ENCODE measurements at regions of chr1 and their contacts with region 1.

Region 1: DNA sequence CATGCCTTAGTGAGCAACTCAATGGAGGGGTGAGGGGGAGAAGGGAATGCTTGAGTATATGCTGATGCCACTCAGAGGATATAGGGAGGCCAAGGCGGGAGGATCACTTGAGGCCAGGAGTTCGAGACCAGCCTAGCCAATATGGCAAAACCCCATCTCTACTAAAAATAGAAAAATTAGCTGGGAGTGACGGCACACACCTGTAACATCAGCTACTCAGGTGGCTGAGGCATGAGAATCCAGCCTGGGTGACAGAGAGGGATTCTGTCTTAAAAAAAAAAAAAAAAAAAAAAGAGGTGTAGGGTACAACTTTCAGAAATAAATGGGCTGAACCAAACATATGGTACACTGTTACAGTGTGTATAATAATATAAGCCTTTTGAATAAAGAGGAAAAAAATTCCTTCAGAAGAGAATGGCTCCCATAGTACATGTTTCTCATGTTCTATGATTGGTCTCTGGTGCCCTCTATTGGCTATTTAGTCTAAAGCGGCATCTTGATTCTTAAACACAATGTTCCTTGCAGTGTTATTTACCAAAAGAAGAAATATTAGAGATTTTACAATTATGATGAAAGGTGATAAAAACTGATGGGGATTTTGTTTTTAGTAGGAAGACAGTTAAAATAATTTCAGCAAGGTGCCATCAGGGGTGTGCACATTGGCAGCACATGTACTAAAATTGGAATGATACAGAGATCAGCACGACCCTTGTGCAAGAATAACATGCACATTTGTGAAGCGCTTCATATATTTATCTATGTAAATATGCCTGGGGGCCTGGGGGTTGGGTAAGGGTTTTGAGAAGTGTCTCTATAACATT is 109.8 kb downstream of the PATJ start:
- DNase-seq: peak; percentile 33
- H3K4me3 ChIP-seq: no peak overlapping the region
- H3K27ac ChIP-seq: no peak overlapping the region
- H3K4me1 ChIP-seq: no peaks in the 10 kb centered on the region
- H3K27me3 ChIP-seq: no peaks in the 10 kb centered on the region
- CTCF ChIP-seq: peak; percentile 25 to 77 (median 70)
- POLR2A ChIP-seq: no peak

Region 2: GRCh38 chr1:59971464-59971911 is 1880.6 kb before region 1 on chr1:
- intact Hi-C with region 1: loop called (anchors 10 kb)
- DNase-seq: peak; percentile 60
- H3K4me3 ChIP-seq: no peak overlapping the region
- H3K27ac ChIP-seq: no peak overlapping the region
- H3K4me1 ChIP-seq: peaks cover 11% of the 10 kb centered on the region
- H3K27me3 ChIP-seq: no peaks in the 10 kb centered on the region
- CTCF ChIP-seq: peak; percentile 72 to 89 (median 86)
- POLR2A ChIP-seq: no peak

Region 3: DNA sequence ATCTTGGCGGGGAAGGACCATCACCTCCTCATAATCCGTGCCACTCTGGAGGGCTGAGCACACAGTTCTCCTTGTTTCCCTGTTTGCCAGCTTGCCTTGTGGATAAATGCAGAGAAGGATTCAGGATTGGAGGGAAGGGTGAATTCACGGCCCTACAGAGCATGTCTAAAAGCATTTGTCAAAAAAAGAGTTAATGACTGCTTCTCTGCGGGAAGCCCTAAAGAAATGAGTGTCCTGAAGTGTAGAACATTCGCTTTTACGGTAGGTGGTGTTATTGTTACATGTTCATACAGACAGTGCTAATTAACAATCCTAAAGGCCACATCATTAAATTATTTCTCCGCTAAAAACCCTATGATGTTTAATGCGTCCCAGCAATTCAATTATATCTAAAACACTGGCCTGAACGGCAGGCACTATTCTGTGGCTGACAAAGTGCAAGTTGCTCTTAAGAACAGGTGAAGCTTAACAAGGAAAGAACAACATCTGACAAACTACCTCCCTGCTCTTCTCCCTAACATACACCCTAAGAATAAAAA is 882.0 kb before region 1 on chr1:
- intact Hi-C with region 1: loop called (anchors 2 kb)
- DNase-seq: no peak
- H3K4me3 ChIP-seq: no peak overlapping the region
- H3K27ac ChIP-seq: no peak overlapping the region
- H3K4me1 ChIP-seq: no peaks in the 10 kb centered on the region
- H3K27me3 ChIP-seq: no peaks in the 10 kb centered on the region
- CTCF ChIP-seq: peak in 3 of 4 experiments; percentile 31 to 63 (median 57)
- POLR2A ChIP-seq: no peak

Region 4: GRCh38 chr1:61343734-61344420 is 508.2 kb before region 1 on chr1:
- intact Hi-C with region 1: loop called (anchors 10 kb)
- DNase-seq: no peak
- H3K4me3 ChIP-seq: no peak overlapping the region
- H3K27ac ChIP-seq: no peak overlapping the region
- H3K4me1 ChIP-seq: no peaks in the 10 kb centered on the region
- H3K27me3 ChIP-seq: no peaks in the 10 kb centered on the region
- CTCF ChIP-seq: no peak
- POLR2A ChIP-seq: no peak

Region 5: DNA sequence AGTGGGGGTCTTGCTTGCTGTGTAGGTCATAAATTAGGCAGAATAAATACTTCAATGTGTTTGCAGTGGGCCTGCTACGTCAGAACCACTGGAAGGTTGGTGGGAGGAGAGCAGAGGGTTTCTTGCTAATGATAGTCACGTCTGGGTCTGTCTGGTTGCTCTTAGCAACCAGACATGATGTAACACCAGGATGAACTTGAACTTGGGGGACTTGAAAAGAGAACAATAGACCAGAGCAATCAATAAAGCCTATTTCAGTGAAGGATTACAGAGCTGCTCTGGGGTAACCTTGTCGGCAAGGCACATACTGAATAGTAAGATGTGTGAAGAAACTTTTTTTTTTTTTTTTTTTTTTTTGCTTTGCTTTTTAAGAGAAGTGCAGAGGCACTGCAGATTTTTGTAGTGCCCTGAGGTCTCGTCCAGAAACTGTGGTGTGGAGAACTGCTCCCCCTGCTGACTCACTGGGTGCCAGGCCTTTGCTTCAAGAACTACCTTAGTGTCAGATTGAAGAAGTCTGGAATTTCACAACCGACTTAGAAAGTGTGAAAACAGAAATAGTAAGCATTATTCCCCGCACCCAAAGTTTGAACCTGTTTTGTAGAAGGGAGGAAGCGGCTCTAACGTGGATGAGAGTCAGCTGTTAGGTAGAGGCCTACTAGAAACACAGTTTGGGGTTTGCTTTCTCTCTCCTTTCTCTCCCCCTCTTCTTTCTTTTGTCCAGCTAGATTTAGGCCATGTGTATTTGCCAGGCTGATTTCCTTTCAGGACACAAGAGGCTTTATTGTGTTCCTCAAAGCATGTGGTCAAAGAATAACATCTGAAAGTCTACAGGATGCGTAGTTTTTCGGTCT is 398.7 kb before region 1 on chr1:
- intact Hi-C with region 1: loop called (anchors 5 kb)
- DNase-seq: peak; percentile 84
- H3K4me3 ChIP-seq: no peak overlapping the region
- H3K27ac ChIP-seq: peak overlapping the region; percentile 49 to 59
- H3K4me1 ChIP-seq: peaks cover 12% of the 10 kb centered on the region
- H3K27me3 ChIP-seq: no peaks in the 10 kb centered on the region
- CTCF ChIP-seq: peak in 3 of 4 experiments; percentile 59 to 78 (median 74)
- POLR2A ChIP-seq: no peak

Region 6: DNA sequence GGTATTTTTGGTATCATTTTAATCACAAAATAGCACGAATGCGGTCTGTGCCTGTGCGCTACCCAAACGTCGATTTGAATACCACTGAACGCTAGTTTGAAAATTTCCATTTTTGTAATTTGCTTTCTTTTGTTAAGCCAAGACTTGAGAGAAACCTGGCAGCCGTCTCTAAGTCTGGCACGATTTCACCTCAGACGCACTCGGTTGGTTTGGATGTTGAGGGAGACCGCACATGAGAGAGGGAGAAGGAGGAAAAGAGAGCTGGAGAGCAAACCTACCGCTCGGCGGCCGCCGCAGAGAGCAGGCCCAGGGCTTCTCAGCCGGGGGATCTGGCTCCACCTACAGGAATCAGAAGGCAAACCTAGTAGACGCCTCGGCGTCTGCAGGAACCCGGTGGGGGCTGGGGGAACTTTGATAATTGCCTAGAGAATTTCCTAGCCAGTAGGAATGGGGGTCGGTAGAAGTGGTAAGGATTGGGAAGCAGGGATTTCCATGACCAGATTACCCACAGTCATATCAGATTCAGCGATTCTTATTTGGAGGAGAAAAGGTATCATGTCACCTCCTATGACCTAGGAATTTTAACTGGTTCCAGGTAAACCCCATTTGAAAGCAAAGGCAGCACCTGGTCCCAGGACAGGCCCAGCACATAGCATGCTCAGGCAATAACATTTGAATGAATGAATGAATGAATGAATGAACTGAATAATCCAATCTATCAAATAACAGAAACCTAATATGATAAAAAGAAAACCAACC is 210.3 kb before region 1 on chr1:
- intact Hi-C with region 1: loop called (anchors 5 kb)
- DNase-seq: peak; percentile 64
- H3K4me3 ChIP-seq: peak overlapping the region in 1 of 2 donors; percentile 5
- H3K27ac ChIP-seq: peak overlapping the region; percentile 67
- H3K4me1 ChIP-seq: peaks cover 11% of the 10 kb centered on the region
- H3K27me3 ChIP-seq: no peaks in the 10 kb centered on the region
- CTCF ChIP-seq: peak; percentile 25 to 73 (median 58)
- POLR2A ChIP-seq: no peak

Region 7: DNA sequence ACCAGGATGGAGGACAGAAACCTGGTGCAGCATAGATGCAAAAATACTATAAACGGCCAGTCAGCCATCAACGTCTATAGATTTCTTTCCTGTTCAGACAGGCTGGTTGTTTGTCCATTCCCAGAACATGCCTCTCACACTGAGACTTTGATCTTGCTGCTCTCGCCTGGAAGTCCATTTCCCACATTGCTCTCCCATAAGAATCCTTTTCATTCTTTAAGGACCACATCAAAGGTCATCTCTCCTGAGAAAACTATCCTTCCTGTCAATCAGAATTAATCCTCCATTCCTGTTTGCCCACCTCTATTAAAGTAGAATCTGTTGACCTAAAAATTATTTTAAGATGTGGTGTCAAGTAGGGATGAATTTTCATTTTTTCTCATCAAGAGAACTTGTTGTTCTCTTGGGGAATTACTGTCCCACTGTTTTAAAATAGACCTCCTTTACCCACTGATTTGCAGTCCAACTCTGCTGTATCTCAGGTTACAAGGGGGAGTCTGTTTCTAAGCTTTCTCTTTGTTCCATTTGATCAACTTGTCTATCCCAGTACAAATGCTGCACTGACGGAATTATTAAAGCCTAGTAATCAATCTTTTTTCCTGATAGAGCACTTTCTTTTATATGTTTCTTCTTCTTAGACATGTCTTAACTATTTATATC is 62.9 kb after region 1 on chr1:
- intact Hi-C with region 1: no loop called
- DNase-seq: no peak
- H3K4me3 ChIP-seq: no peak overlapping the region
- H3K27ac ChIP-seq: no peak overlapping the region
- H3K4me1 ChIP-seq: no peaks in the 10 kb centered on the region
- H3K27me3 ChIP-seq: no peaks in the 10 kb centered on the region
- CTCF ChIP-seq: no peak
- POLR2A ChIP-seq: no peak

Region 8: GRCh38 chr1:62068978-62069377 is 216.9 kb after region 1 on chr1:
- intact Hi-C with region 1: loop called (anchors 10 kb)
- DNase-seq: no peak
- H3K4me3 ChIP-seq: no peak overlapping the region
- H3K27ac ChIP-seq: peak overlapping the region; percentile 44 to 50
- H3K4me1 ChIP-seq: no peaks in the 10 kb centered on the region
- H3K27me3 ChIP-seq: no peaks in the 10 kb centered on the region
- CTCF ChIP-seq: no peak
- POLR2A ChIP-seq: no peak

Measured in prostate gland (tissue), 2 donors.